Activated CD4-positive, alpha-beta T cell treated with anti-CD3 and anti-CD28 coated beads, Interleukin-2, amount 10 ng/mL, durations not matched to agents 24 days and 14 days (primary cell): ENCODE measurements at regions of chr7 and their contacts with region 1.

Region 1: DNA sequence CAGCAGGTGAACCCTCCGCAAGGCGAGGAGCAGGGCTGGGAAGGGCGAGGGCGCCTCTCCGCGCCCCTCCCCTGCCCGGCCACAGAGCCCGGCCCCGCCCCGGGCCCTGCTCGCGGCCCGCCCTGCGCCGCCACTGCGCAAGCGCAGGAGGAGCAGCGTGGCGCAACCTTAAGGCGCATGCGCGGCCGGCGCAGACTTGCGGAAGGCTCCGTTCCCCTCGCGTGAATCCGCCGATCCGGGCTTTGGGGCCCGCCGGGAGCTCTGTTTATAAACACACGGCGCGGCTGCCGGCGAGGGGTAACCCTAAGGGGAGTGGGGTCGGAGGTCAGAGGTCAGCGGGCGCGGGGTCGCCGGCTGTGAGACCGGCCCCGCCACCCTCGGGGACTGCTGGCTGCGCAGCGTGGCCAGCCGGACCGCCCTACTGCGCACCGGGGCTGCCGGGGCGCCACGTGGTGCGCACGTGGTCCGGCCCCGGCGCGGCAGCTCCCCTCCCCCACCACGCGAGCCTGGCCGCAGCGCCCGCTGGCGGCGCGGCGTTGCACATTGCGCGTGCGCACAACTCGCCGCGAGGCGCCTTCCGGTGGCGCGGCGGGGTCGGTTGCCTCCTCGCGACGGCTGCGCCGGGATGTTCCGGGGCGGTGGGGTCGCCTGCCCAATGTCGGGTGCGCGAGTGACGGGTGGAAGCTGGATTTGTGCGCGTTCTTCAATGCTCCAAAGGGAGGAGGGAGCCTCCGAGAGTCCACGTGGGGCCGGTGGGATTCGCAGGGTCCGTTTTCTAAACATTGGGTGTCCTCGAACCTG is 40.2 kb upstream of the FOXK1 start:
- DNase-seq: peak; percentile 99
- H3K4me3 Mint-ChIP-seq: peak overlapping the region; percentile 95
- H3K27ac Mint-ChIP-seq: peak overlapping the region; percentile 95
- H3K4me1 Mint-ChIP-seq: peaks cover 15% of the 10 kb centered on the region
- H3K27me3 Mint-ChIP-seq: no peaks in the 10 kb centered on the region

Region 2: DNA sequence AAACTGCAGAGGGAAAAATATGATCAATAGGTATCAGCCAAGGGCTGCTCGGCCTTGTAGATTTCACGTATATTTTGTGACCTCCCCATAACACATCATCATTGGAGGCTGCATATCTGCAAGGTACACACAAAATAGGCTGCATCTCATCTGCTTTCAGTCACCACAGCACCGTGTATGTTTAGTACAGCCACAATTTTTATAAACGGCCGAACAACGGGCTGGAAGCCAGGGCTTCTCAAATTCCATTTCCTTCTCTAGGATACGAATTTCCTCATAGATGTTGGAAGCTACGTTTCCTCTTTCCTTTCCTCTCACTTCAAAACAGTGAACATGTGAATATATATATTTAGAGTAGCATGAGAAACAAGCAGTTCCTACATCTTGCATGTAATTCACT is 20.0 kb after region 1 on chr7:
- intact Hi-C with region 1: loop called (anchors 2 kb)
- DNase-seq: no peak
- H3K4me3 Mint-ChIP-seq: no peak overlapping the region
- H3K27ac Mint-ChIP-seq: no peak overlapping the region
- H3K4me1 Mint-ChIP-seq: peaks cover 2% of the 10 kb centered on the region
- H3K27me3 Mint-ChIP-seq: no peaks in the 10 kb centered on the region

Region 3: GRCh38 chr7:4744391-4745264 is 102.8 kb after region 1 on chr7:
- intact Hi-C with region 1: loop called (anchors 1 kb)
- DNase-seq: peak; percentile 95
- H3K4me3 Mint-ChIP-seq: peak overlapping the region; percentile 89
- H3K27ac Mint-ChIP-seq: peak overlapping the region; percentile 94
- H3K4me1 Mint-ChIP-seq: peaks cover 66% of the 10 kb centered on the region
- H3K27me3 Mint-ChIP-seq: no peaks in the 10 kb centered on the region

Region 4: DNA sequence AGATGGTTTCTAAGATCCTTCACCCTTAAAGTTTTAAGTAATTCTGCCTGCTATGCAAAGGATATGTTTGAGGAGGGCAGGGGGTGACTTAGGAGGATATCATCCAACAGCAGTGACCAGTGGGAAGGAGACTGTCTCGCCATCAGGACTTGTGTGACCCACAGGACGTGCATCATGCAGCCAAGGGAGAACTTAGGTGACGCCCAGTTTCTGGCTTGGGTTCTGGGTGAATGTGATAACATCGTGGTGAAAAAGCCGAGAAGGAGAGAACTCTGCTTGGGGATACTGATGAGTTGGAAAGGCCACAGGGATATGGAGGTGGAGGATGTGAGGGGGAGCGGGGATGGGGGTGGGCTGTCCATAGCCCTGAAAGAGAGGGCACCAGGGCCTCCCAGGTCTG is 552.0 kb after region 1 on chr7:
- intact Hi-C with region 1: loop called (anchors 5 kb)
- DNase-seq: no peak
- H3K4me3 Mint-ChIP-seq: no peak overlapping the region
- H3K27ac Mint-ChIP-seq: no peak overlapping the region
- H3K4me1 Mint-ChIP-seq: peaks cover 13% of the 10 kb centered on the region
- H3K27me3 Mint-ChIP-seq: no peaks in the 10 kb centered on the region